Naive thymus-derived CD4-positive, alpha-beta T cell (primary cell): ENCODE measurements at regions of chr15 and their contacts with region 1.

Region 1: DNA sequence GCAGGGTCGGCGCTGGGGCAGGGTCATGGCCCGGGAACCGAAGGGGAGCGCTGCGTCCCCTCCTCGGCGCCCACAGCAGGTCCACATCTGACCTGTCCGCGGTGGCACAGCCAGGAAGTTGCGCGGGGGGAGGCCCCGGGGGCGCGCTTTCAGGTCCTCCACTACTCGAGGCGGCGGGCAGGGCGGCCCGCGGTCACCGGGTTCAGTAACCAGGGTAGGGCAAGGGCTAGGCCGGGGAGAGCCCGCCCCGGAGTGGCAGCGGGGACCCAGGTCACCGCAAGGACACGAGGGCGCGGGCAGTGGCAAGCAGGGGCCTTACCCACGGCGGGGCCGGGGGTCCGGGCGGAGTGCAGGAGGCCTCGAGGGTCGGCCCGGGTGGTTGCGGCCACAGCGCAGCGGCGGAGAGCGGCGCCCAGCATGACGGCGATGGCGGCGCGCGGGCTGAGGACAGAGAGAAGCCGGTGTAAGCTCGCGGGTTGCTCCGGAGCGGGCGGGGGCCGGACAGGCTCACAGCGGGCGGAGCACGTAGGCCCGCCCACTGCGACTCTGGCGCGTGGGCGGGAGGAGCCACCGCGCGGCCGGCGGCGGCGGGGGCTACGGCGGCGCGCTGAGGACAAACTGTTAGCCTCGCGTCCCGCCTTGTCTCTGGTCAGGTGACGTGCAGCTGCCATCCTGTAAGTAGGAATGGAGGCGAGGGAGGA is at the start of gene COX5A:
- DNase-seq: peak; percentile 86 to 94 (median 92)
- ATAC-seq: peak; percentile 99
- H3K4me3 ChIP-seq: peak within 1 kb of the TSS; percentile 62
- H3K4me3 Mint-ChIP-seq: peak within 1 kb of the TSS; percentile 87 to 97 (median 94)
- H3K27ac ChIP-seq: peak within 1 kb of the TSS; percentile 85
- H3K27ac Mint-ChIP-seq: peak within 1 kb of the TSS; percentile 85 to 95 (median 91)
- H3K4me1 ChIP-seq: peaks cover 0 to 17% of the 10 kb centered on the region in 2 donors
- H3K4me1 Mint-ChIP-seq: peaks cover 16 to 38% (median 26%) of the 10 kb centered on the region in 7 donors
- H3K27me3 ChIP-seq: no peaks in the 10 kb centered on the region
- H3K27me3 Mint-ChIP-seq: peaks cover 0 to 3% (median 0%) of the 10 kb centered on the region in 5 donors
- total RNA-seq, gene COX5A: 44.4 to 210 (median 59.2) TPM

Region 2: DNA sequence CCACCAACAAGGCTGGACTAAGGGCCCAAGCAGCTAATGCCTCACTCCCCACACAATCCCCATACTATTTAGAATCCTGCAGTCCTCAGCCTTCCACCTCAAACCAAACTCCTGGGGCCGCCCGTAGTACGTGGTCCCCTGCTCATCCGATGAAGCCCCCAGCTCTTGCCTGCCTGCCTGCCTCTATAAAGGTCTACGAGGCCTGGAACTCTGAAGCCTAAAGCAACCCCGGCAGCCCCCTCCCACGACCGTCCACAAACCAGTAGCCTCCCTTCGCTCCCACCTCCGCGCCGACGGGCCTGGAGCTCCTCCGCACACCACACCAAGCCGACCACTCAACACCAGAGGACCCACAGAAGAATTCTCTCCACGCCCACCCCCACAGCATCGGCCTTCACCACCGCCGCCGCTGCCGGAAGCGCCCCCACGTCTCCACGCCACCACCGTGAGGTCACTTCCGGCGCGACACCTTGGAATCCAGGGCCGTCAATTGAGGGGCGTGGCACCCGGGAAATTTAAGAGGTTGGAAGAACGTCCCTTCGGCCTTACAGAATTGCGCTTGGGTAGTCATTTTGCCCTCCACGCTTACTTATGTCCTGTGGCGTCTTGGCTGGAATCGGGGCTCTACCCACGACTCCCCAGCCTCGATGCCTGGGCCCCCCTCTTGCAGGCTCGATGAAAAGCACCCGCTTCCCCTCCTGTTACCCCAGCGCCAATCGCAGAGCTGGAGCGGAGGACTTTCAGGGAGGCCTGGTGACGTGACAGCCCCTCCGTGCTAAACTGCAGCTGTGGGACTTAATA is 241.9 kb before region 1 on chr15 and contains the start of gene EDC3:
- CTCF ChIA-PET with region 1: no interaction called
- POLR2A ChIA-PET with region 1: no interaction called
- intact Hi-C with region 1: loop called in 1 of 2 experiments (anchors 1 kb)
- DNase-seq: peak; percentile 69 to 87 (median 84)
- ATAC-seq: peak; percentile 93
- H3K4me3 ChIP-seq: peak within 1 kb of the TSS; percentile 71
- H3K4me3 Mint-ChIP-seq: peak within 1 kb of the TSS; percentile 96 to 100 (median 100)
- H3K27ac ChIP-seq: peak within 1 kb of the TSS; percentile 86
- H3K27ac Mint-ChIP-seq: peak within 1 kb of the TSS; percentile 97 to 100 (median 99)
- H3K4me1 ChIP-seq: peaks cover 12 to 14% of the 10 kb centered on the region in 2 donors
- H3K4me1 Mint-ChIP-seq: peaks cover 27 to 54% (median 48%) of the 10 kb centered on the region in 7 donors
- H3K27me3 ChIP-seq: no peaks in the 10 kb centered on the region
- H3K27me3 Mint-ChIP-seq: peaks cover 0 to 3% (median 0%) of the 10 kb centered on the region in 5 donors
- total RNA-seq, gene EDC3: 29.0 to 45.3 (median 38.7) TPM

Region 3: DNA sequence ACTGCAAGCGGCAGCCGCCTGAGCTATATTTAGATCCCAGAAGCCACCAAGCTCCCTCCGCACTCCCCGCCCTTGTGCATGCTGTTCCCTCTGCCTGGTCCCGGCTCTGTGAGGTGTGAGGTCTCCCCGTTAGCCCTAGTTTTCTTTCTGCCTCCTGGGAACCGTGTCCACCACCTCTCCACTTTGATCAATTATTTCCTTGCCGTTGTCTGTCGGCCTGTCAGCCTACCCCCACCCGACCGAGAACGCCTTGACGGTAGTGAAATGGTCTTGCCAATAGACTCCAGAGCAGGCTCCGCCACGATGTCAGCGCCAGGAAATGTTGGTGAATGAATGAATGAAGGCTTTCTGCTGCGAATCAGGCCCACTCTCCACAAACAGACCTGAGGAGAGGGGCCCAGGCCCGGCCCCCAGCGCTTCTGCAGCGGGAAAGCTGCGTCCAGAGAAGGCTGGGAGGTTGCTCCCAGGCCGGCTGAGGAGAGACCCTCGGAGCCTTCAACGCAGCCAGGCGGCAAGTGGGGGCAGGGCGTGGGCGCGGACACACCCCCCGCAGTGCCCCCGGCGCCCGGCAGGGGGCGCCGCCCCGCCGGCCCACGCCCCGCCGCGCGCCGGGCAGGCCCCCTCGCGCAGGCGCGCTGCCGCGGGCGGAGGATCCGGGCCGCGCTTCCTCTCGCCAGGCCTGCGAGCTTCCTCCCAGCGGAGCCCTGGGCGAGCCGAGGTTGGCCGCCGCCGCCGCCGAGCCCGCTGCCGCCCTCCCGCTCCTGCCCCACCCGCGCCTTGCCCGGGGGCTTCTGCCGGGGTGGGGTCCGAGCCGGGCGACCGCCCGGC is 156.1 kb before region 1 on chr15 and contains the start of gene CSK:
- CTCF ChIA-PET with region 1: no interaction called
- POLR2A ChIA-PET with region 1: interaction called, 6 read pairs
- intact Hi-C with region 1: loop called in 1 of 2 experiments (anchors 2 kb)
- DNase-seq: peak; percentile 68 to 90 (median 85)
- ATAC-seq: peak; percentile 80
- H3K4me3 ChIP-seq: peak within 1 kb of the TSS; percentile 91
- H3K4me3 Mint-ChIP-seq: peak within 1 kb of the TSS; percentile 87 to 99 (median 96)
- H3K27ac ChIP-seq: peak within 1 kb of the TSS; percentile 92
- H3K27ac Mint-ChIP-seq: peak within 1 kb of the TSS; percentile 90 to 100 (median 98)
- H3K4me1 ChIP-seq: peaks cover 62% of the 10 kb centered on the region in 2 donors
- H3K4me1 Mint-ChIP-seq: peaks cover 64 to 73% (median 70%) of the 10 kb centered on the region in 7 donors
- H3K27me3 ChIP-seq: no peaks in the 10 kb centered on the region
- H3K27me3 Mint-ChIP-seq: no peaks in the 10 kb centered on the region
- total RNA-seq, gene CSK: 163 to 421 (median 228) TPM

Region 4: GRCh38 chr15:74799856-74800547 is 137.7 kb before region 1 on chr15:
- CTCF ChIA-PET with region 1: no interaction called
- POLR2A ChIA-PET with region 1: no interaction called
- intact Hi-C with region 1: loop called in 1 of 2 experiments (anchors 1 kb)
- DNase-seq: peak; percentile 76 to 92 (median 85)
- ATAC-seq: peak; percentile 98
- H3K4me3 ChIP-seq: no peak overlapping the region
- H3K4me3 Mint-ChIP-seq: peak overlapping the region in 6 of 10 donors; percentile 13 to 61 (median 41)
- H3K27ac ChIP-seq: peak overlapping the region; percentile 92
- H3K27ac Mint-ChIP-seq: peak overlapping the region; percentile 66 to 93 (median 84)
- H3K4me1 ChIP-seq: peaks cover 51 to 54% of the 10 kb centered on the region in 2 donors
- H3K4me1 Mint-ChIP-seq: peaks cover 31 to 60% (median 48%) of the 10 kb centered on the region in 7 donors
- H3K27me3 ChIP-seq: no peaks in the 10 kb centered on the region
- H3K27me3 Mint-ChIP-seq: no peaks in the 10 kb centered on the region

Region 5: DNA sequence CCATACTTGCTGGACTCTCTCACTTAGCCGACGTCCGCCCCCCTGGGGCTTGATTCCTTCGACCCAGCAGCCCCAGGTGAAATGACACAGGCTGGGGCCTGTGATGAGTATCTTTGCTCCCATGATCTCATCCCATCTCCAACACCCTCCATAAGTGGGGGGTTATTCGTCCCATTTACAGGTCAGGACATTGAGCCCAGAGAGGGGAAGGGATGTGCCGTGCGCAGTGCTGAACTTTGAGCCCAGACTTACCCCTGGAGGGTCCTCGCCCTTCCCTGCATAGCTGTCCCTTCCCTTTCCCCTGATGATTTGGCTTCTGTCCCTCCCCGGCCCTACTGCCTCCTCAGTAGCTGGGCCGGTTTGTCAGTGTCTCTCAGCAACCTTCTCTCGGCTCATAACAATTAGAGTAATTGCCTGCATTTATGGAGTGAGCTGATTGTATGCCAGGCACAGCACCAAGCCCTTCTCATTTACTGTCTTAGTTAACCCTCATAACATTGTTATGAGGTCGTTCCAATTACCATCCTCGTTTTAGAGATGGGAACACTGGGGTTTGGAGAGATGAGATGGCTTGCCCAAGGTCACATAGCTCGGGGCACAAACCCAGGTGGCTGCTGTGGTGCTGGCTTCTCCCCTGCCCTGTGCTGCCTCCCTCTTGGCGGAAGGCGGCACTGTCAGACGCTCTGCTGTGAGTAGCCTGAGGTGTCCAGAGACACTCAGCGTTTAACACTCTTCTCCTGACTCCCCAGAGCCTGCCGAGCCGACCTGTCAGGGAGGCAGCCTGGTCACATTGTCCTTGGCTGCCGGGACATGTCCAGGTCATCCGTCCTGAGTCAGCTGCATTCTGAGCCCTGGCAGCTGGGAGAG is 120.7 kb before region 1 on chr15:
- CTCF ChIA-PET with region 1: no interaction called
- POLR2A ChIA-PET with region 1: no interaction called
- intact Hi-C with region 1: no loop called
- DNase-seq: no peak
- ATAC-seq: no peak
- H3K4me3 ChIP-seq: no peak overlapping the region
- H3K4me3 Mint-ChIP-seq: no peak overlapping the region
- H3K27ac ChIP-seq: no peak overlapping the region
- H3K27ac Mint-ChIP-seq: peak overlapping the region in 1 of 9 donors; percentile 62
- H3K4me1 ChIP-seq: no peaks in the 10 kb centered on the region
- H3K4me1 Mint-ChIP-seq: peaks cover 0 to 17% (median 0%) of the 10 kb centered on the region in 7 donors
- H3K27me3 ChIP-seq: no peaks in the 10 kb centered on the region
- H3K27me3 Mint-ChIP-seq: peaks cover 0 to 3% (median 0%) of the 10 kb centered on the region in 5 donors

Region 6: DNA sequence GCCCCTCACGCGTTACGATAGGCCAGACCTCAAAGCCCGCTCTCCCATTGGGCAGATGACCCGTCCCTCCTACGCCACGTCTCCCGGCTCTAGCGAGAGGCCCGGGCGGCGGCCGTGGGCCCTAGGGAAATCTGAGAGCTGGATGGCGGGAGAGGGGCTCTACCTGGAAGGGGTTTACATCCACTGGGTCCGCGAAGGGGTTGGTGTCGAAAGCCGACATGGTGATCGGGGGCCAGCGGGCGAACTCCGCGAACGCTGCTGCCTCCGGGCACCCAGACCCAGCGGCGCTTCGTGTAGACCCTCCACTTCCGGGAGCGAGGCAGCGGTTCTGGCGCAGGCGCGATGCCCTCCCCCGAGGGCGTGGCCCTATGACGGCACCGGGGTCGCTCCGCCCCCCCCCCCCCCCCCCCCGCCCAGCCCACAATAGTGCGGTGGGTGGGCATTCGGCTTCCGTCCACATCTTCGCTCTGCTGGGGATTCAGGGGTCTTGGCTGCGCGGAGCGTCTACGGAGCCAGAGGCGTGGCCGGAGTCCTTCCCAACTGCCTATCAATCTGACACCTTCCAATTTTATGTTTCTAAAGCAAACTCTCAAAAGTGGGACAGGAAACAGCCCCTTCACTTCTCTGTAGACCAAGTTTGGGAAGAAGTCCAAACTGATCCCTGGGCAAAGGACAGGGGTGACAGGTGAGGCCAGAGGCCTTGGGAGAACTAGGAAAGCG is 64.5 kb before region 1 on chr15 and contains the start of gene SCAMP2:
- CTCF ChIA-PET with region 1: no interaction called
- POLR2A ChIA-PET with region 1: no interaction called
- intact Hi-C with region 1: loop called (anchors 1 to 2 kb)
- DNase-seq: peak; percentile 83 to 94 (median 91)
- ATAC-seq: peak; percentile 95
- H3K4me3 ChIP-seq: peak within 1 kb of the TSS; percentile 86
- H3K4me3 Mint-ChIP-seq: peak within 1 kb of the TSS; percentile 92 to 100 (median 98)
- H3K27ac ChIP-seq: peak within 1 kb of the TSS; percentile 98
- H3K27ac Mint-ChIP-seq: peak within 1 kb of the TSS; percentile 88 to 99 (median 96)
- H3K4me1 ChIP-seq: peaks cover 38 to 39% of the 10 kb centered on the region in 2 donors
- H3K4me1 Mint-ChIP-seq: peaks cover 31 to 54% (median 45%) of the 10 kb centered on the region in 7 donors
- H3K27me3 ChIP-seq: no peaks in the 10 kb centered on the region
- H3K27me3 Mint-ChIP-seq: peaks cover 0 to 8% (median 0%) of the 10 kb centered on the region in 5 donors
- total RNA-seq, gene SCAMP2: 78.9 to 130 (median 116) TPM

Region 7: DNA sequence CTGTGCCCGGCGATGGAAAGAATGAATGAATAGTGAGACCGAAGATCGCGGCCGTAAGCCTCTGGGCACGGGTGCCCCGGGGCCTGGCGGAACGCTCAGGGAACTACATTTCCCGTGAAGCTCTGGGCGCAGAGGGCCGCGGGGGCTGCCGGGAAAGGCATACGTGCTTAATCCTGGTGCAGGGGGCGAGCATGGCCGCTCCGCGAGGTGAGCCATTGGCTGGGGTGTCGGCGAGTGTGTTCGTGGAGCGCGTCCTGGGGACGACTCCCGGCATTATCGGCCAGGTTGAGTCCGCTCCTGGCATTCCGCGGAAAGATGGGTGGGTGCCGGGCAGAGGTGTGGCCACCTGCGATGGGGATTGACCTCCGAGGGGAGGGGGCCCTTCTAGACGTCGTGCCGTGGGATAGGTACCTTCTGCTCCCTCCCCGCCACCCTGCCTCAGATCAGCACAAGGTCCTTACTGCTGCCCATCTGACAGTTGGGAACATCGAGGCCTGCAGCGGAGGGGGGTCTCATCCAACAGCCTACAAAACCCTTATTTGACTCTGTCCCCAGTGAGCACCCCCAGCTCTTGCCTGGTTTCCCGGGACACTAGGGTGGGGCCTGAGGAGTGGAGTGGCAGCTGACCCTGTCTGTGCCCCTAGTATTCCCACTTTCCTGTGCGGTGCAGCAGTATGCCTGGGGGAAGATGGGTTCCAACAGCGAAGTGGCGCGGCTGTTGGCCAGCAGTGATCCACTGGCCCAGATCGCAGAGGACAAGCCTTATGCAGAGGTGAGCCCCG is 47.7 kb before region 1 on chr15 and contains the start of gene MPI:
- CTCF ChIA-PET with region 1: no interaction called
- POLR2A ChIA-PET with region 1: interaction called, 3 read pairs
- intact Hi-C with region 1: loop called (anchors 1 to 5 kb)
- DNase-seq: peak; percentile 65 to 87 (median 79)
- ATAC-seq: peak; percentile 97
- H3K4me3 ChIP-seq: peak within 1 kb of the TSS; percentile 94
- H3K4me3 Mint-ChIP-seq: peak within 1 kb of the TSS; percentile 81 to 95 (median 90)
- H3K27ac ChIP-seq: peak within 1 kb of the TSS; percentile 84
- H3K27ac Mint-ChIP-seq: peak within 1 kb of the TSS; percentile 83 to 99 (median 94)
- H3K4me1 ChIP-seq: peaks cover 33 to 36% of the 10 kb centered on the region in 2 donors
- H3K4me1 Mint-ChIP-seq: peaks cover 30 to 59% (median 49%) of the 10 kb centered on the region in 7 donors
- H3K27me3 ChIP-seq: no peaks in the 10 kb centered on the region
- H3K27me3 Mint-ChIP-seq: no peaks in the 10 kb centered on the region
- total RNA-seq, gene MPI: 34.0 to 97.8 (median 80.6) TPM

Region 8: DNA sequence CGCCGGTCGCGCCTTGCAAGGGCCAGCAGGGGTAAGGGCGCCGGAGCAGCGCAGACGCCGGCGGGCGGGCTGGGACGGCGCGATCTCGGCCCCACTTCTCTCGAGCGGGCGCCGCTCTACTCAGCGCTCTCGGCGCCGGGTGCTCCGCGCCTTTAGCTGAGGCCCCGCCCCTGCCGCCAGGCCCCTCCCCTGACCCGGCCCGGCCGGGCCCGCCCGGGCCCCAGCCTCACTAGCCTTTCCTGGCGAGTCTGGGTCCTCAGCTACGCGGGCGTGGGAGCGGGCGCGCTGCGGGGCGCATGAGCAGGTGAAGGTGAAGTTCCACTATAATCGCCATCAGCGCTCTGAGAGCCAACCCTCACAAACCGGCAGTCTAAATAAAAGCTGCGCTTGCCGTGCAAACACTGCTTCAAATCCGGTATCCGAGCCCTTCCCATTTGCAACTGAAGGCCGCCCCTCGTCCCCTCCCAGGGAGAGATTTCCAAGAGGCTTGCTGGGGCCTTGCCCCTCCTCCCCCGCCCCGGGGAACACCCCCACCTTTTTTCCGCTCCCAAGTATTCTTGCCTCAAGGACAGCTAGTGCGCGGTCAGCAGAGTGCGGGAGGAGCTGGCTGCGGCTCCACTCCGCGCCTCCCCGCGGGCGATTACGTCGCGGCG is 19.0 kb after region 1 on chr15 and contains the start of gene RPP25:
- CTCF ChIA-PET with region 1: no interaction called
- POLR2A ChIA-PET with region 1: interaction called, 4 read pairs
- intact Hi-C with region 1: loop called (anchors 1 kb)
- DNase-seq: peak; percentile 32 to 82 (median 49)
- ATAC-seq: peak; percentile 92
- H3K4me3 ChIP-seq: peak within 1 kb of the TSS; percentile 67
- H3K4me3 Mint-ChIP-seq: peak within 1 kb of the TSS; percentile 68 to 83 (median 81)
- H3K27ac ChIP-seq: peak within 1 kb of the TSS; percentile 1
- H3K27ac Mint-ChIP-seq: no peak within 1 kb of the TSS
- H3K4me1 ChIP-seq: peaks cover 17 to 23% of the 10 kb centered on the region in 2 donors
- H3K4me1 Mint-ChIP-seq: peaks cover 14 to 40% (median 31%) of the 10 kb centered on the region in 7 donors
- H3K27me3 ChIP-seq: peaks cover 9 to 10% of the 10 kb centered on the region in 2 donors
- H3K27me3 Mint-ChIP-seq: peaks cover 25 to 47% (median 27%) of the 10 kb centered on the region in 5 donors
- total RNA-seq, gene RPP25: 0.95 to 5.8 (median 3.3) TPM

Region 9: GRCh38 chr15:74978503-74978902 is 40.8 kb after region 1 on chr15:
- CTCF ChIA-PET with region 1: no interaction called
- POLR2A ChIA-PET with region 1: no interaction called
- intact Hi-C with region 1: no loop called
- DNase-seq: no peak
- ATAC-seq: no peak
- H3K4me3 ChIP-seq: no peak overlapping the region
- H3K4me3 Mint-ChIP-seq: no peak overlapping the region
- H3K27ac ChIP-seq: no peak overlapping the region
- H3K27ac Mint-ChIP-seq: no peak overlapping the region
- H3K4me1 ChIP-seq: no peaks in the 10 kb centered on the region
- H3K4me1 Mint-ChIP-seq: peaks cover 0 to 5% (median 0%) of the 10 kb centered on the region in 7 donors
- H3K27me3 ChIP-seq: no peaks in the 10 kb centered on the region
- H3K27me3 Mint-ChIP-seq: peaks cover 0 to 13% (median 0%) of the 10 kb centered on the region in 5 donors

Region 10: GRCh38 chr15:75049392-75049791 is 111.6 kb after region 1 on chr15:
- CTCF ChIA-PET with region 1: no interaction called
- POLR2A ChIA-PET with region 1: no interaction called
- intact Hi-C with region 1: no loop called
- DNase-seq: no peak
- ATAC-seq: no peak
- H3K4me3 ChIP-seq: no peak overlapping the region
- H3K4me3 Mint-ChIP-seq: no peak overlapping the region
- H3K27ac ChIP-seq: no peak overlapping the region
- H3K27ac Mint-ChIP-seq: no peak overlapping the region
- H3K4me1 ChIP-seq: peaks cover 0 to 5% of the 10 kb centered on the region in 2 donors
- H3K4me1 Mint-ChIP-seq: peaks cover 0 to 38% (median 0%) of the 10 kb centered on the region in 7 donors
- H3K27me3 ChIP-seq: no peaks in the 10 kb centered on the region
- H3K27me3 Mint-ChIP-seq: no peaks in the 10 kb centered on the region